ENCODE measurements at regions of chr3 and their contacts with region 1.

Region 1: GRCh38 chr3:159609625-159610024 is 379.0 kb upstream of the IL12A start:
- DNase-seq: no peak
- ATAC-seq: no peak
- H3K4me3 ChIP-seq: no peak overlapping the region
- H3K27ac ChIP-seq: no peak overlapping the region
- H3K4me1 ChIP-seq: peaks cover 0 to 4% (median 0%) of the 10 kb centered on the region in 9 donors
- H3K27me3 ChIP-seq: no peaks in the 10 kb centered on the region
- CTCF ChIP-seq: no peak

Region 2: GRCh38 chr3:159818399-159818798 is 208.8 kb after region 1 on chr3:
- intact Hi-C with region 1: loop called in 1 of 10 experiments (anchors 5 kb)
- DNase-seq: peak; percentile 60 to 66
- ATAC-seq: peak; percentile 61 to 88 (median 82)
- H3K4me3 ChIP-seq: no peak overlapping the region
- H3K27ac ChIP-seq: peak overlapping the region in 3 of 10 donors; percentile 17 to 40 (median 33)
- H3K4me1 ChIP-seq: peaks cover 0 to 38% (median 27%) of the 10 kb centered on the region in 9 donors
- H3K27me3 ChIP-seq: no peaks in the 10 kb centered on the region
- CTCF ChIP-seq: peak in 5 of 9 donors; percentile 11 to 54 (median 33)

Region 3: GRCh38 chr3:160355826-160356225 is 746.2 kb after region 1 on chr3:
- intact Hi-C with region 1: no loop called
- DNase-seq: no peak
- ATAC-seq: no peak
- H3K4me3 ChIP-seq: no peak overlapping the region
- H3K27ac ChIP-seq: no peak overlapping the region
- H3K4me1 ChIP-seq: no peaks in the 10 kb centered on the region
- H3K27me3 ChIP-seq: no peaks in the 10 kb centered on the region
- CTCF ChIP-seq: no peak